ENCODE measurements at regions of chr1 and their contacts with region 1.

Region 1: GRCh38 chr1:54052934-54053744 is at the starts of genes TCEANC2 and TMEM59:
- DNase-seq: peak; percentile 98
- ATAC-seq: peak; percentile 96
- H3K4me3 Mint-ChIP-seq: no peak within 1 kb of the TSS
- H3K27ac Mint-ChIP-seq: no peak within 1 kb of the TSS
- H3K4me1 Mint-ChIP-seq: peaks cover 33% of the 10 kb centered on the region
- H3K27me3 Mint-ChIP-seq: no peaks in the 10 kb centered on the region
- total RNA-seq, gene TCEANC2: 14.0 to 14.2 TPM
- total RNA-seq, gene TMEM59: 99.3 to 120 TPM

Region 2: DNA sequence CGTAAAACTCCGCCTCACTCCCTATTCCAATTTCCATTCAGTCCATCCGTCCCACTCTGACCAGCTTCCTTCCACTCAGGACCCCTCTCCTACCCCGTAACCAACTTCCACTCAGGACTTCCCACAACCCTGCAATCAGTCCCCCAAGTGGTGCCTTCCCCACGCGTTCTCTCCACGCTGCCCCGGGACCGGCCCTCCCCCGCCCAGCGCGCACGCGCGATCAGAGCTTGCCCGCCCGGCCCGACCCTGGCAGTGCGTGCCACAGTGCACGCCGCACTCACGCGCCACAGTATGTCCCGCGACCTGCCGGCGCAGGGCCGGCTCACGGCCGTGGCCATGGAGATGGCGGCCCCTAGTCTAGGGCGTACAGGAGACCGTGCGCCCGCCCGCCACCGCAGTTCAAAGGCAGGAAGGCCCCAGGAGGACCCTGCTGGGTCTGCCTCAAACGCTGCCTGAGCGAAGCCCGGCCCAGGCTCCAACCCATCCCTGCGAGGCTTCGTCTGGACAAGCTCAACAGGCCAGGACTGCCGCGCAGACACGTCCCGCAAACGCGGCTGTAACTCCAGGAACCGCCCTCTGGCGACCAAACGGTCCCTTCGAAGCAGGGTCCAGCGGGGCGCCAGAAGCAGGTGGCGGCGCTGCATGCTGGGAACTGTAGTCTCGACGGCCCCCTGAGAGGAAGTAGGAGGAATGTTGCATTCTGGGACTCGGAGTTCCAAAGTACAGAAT is 215.1 kb before region 1 on chr1 and contains the start of gene NDC1:
- CTCF ChIA-PET with region 1: interaction called, 4 read pairs
- POLR2A ChIA-PET with region 1: interaction called, 7 read pairs
- intact Hi-C with region 1: loop called (anchors 1 kb)
- DNase-seq: peak; percentile 92
- ATAC-seq: peak; percentile 93
- H3K4me3 Mint-ChIP-seq: peak within 1 kb of the TSS; percentile 100
- H3K27ac Mint-ChIP-seq: peak within 1 kb of the TSS; percentile 96
- H3K4me1 Mint-ChIP-seq: peaks cover 25% of the 10 kb centered on the region
- H3K27me3 Mint-ChIP-seq: peaks cover 2% of the 10 kb centered on the region
- total RNA-seq, gene NDC1: 31.2 to 38.5 TPM

Region 3: GRCh38 chr1:54037476-54037875 is 15.7 kb before region 1 on chr1:
- CTCF ChIA-PET with region 1: interaction called, 13 read pairs
- POLR2A ChIA-PET with region 1: interaction called, 4 read pairs
- intact Hi-C with region 1: no loop called
- DNase-seq: no peak
- ATAC-seq: no peak
- H3K4me3 Mint-ChIP-seq: no peak overlapping the region
- H3K27ac Mint-ChIP-seq: no peak overlapping the region
- H3K4me1 Mint-ChIP-seq: no peaks in the 10 kb centered on the region
- H3K27me3 Mint-ChIP-seq: no peaks in the 10 kb centered on the region

Region 4: GRCh38 chr1:54406339-54407153 is 353.4 kb after region 1 on chr1 and contains the start of gene SSBP3:
- CTCF ChIA-PET with region 1: no interaction called
- POLR2A ChIA-PET with region 1: no interaction called
- intact Hi-C with region 1: loop called (anchors 1 to 2 kb)
- DNase-seq: peak; percentile 95
- ATAC-seq: peak; percentile 84
- H3K4me3 Mint-ChIP-seq: peak within 1 kb of the TSS; percentile 76
- H3K27ac Mint-ChIP-seq: peak within 1 kb of the TSS; percentile 88
- H3K4me1 Mint-ChIP-seq: peaks cover 57% of the 10 kb centered on the region
- H3K27me3 Mint-ChIP-seq: no peaks in the 10 kb centered on the region
- total RNA-seq, gene SSBP3: 40.3 to 64.2 TPM

Region 5: DNA sequence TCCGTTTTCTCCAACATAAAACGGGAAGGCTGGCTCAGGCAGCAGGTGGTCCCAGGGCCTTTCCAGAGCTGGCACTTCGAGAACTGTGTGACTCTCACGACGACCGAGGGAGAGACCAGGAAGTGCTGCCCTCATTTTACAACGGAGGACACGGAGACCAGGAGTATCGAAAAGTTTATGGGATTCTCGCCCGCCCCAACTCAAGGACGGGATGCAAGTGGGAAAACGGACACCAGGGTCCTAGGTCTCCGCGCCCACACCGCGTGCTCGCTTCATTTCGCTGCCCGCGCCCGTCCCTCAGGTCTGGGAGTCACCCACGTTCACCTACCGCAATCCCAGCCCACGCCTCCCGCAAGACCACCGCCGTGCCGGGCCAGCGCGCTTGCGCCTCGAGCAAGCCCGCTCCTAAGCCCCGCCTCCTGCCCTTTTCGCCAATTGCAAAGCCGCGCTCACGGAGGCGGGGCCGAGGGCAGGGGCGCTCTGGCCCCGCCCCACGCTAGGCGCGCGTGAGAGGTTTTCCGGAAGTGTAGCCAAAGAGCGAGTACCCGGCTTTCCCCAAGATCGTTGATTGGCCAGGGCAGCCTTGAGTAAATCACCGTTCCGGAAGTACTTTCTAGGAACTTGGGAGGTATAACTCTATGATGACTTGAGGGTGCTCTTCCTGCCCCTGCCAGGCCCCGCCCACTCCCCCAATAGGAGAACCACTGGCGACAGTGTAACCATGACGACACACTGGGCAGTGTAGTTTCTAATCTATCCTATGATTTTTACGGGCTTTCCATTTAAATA is 711.2 kb after region 1 on chr1 and contains the start of gene PARS2:
- CTCF ChIA-PET with region 1: no interaction called
- POLR2A ChIA-PET with region 1: no interaction called
- intact Hi-C with region 1: loop called (anchors 1 kb)
- DNase-seq: peak; percentile 98
- ATAC-seq: peak; percentile 99
- H3K4me3 Mint-ChIP-seq: peak within 1 kb of the TSS; percentile 89
- H3K27ac Mint-ChIP-seq: peak within 1 kb of the TSS; percentile 91
- H3K4me1 Mint-ChIP-seq: peaks cover 13% of the 10 kb centered on the region
- H3K27me3 Mint-ChIP-seq: no peaks in the 10 kb centered on the region
- total RNA-seq, gene PARS2: 6.3 to 6.8 TPM